Breast epithelium (tissue), 4 donors: ENCODE measurements at regions of chr6 and their contacts with region 1.

Region 1: DNA sequence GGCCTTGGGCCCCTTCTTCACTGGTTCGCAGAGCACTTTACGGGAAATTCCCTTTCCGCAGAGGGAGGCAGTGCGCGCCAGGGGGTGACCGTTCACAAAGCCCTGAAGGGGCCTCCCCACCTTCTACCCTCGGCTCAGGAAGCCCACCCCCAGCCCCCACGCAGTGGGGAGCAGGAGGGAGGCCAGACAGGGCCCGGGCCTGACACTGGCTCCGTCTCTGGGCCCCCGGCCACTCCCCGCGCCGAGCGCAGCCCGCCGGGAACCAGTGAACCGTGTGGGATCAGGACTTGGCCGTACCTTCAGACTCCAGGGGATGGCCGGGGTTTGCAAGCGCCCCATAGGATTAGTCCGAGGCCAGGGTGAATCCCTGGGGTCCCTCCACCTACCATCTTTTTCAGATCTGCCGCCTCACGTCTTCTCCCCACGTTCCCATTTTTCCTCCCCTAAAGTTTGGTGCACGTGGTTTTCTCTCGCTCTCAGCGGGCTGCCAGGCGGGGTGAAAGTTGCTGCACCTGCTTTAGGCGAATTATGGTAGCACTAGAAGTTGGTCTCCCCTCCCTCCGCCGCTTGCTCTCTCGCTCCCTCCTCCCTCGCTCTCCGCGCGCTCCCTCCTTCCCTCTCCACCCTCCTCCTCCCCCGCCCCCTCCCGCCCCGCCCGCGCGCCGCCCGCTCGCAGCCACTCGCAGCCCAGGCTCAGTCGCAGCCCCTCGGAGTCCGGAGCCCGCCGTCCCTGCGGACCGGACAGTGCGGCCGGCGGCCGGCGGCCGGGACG is at the start of gene FOXP4:
- DNase-seq: peak; percentile 85 to 86
- H3K4me3 ChIP-seq: peak within 1 kb of the TSS; percentile 81 to 100 (median 89)
- H3K27ac ChIP-seq: peak within 1 kb of the TSS; percentile 82 to 95
- H3K4me1 ChIP-seq: peaks cover 5 to 6% of the 10 kb centered on the region in 2 donors
- H3K27me3 ChIP-seq: no peaks in the 10 kb centered on the region
- CTCF ChIP-seq: no peak
- POLR2A ChIP-seq: no peak
- total RNA-seq, gene FOXP4: 5.1 to 11.0 (median 5.6) TPM

Region 2: DNA sequence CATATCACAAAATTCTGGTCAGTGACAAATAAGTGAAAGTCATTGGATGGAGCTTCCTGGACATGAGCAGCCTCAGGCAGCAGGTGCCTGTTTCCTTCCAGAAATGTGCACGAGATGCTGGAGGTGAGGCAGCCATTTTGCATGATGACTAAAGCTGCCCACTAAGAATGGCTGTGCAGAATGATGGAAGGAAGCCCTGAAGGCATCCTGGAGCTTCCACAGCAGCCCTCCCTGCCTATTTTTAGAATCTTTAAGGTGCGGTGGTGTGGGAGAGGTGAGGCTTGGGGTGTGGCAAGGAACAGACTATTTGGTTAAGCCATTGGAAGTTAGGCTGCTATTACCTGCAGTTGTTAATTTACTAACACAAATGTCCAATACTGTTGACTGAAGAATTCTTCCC is 1923.2 kb before region 1 on chr6:
- intact Hi-C with region 1: no loop called
- DNase-seq: no peak
- H3K4me3 ChIP-seq: no peak overlapping the region
- H3K27ac ChIP-seq: no peak overlapping the region
- H3K4me1 ChIP-seq: no peaks in the 10 kb centered on the region
- H3K27me3 ChIP-seq: no peaks in the 10 kb centered on the region
- CTCF ChIP-seq: no peak
- POLR2A ChIP-seq: no peak

Region 3: GRCh38 chr6:41920921-41921711 is 375.2 kb after region 1 on chr6 and contains the starts of genes BYSL and MED20:
- intact Hi-C with region 1: loop called (anchors 5 kb)
- DNase-seq: peak; percentile 91 to 93
- H3K4me3 ChIP-seq: peak within 1 kb of the TSS; percentile 75 to 88 (median 86)
- H3K27ac ChIP-seq: peak within 1 kb of the TSS; percentile 95 to 99
- H3K4me1 ChIP-seq: peaks cover 6 to 11% of the 10 kb centered on the region in 2 donors
- H3K27me3 ChIP-seq: no peaks in the 10 kb centered on the region
- CTCF ChIP-seq: peak; percentile 95 to 98 (median 97)
- POLR2A ChIP-seq: peak; percentile 53
- total RNA-seq, gene BYSL: 7.7 to 8.8 (median 8.6) TPM
- total RNA-seq, gene MED20: 9.8 to 16.5 (median 9.8) TPM